ENCODE measurements at regions of chr1 and their contacts with region 1.

Region 1: DNA sequence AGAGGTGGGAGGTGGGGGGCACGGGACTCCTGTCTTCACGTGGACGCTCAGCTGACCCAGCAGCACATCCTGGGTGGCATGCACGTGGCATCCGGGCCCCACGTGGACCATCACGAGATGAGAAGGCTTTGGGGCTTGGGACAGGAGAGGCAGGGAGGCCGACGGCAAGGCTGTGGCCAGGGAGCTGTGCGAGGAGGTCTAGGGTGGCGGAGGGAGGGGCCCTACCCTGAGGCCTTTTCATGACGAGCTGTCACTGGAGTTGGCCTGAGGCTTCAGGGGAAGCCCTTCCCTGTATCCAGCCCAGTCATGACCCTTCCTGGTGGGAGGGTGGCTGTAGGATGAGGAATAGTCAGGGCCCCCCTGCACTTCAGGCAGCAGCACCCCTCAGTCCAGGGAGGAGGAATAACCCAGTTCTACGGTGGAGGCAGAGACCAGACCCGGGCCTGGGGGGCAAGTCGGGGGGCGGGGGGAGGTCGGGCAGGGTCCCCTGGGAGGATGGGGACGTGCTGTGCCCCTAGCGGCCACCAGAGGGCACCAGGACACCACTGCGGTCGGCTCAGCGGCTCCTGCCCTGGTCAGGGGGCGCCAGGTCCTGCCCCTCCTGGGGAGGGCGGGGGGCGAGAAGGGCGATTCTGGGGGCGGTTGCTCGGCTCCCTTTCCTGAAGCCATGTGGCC is 2.0 kb upstream of the PERM1 start:
- DNase-seq: peak; percentile 52
- H3K27ac ChIP-seq: peak overlapping the region; percentile 7; the same call in 1 of the 2 replicates
- CTCF ChIP-seq: peak; percentile 93

Region 2: DNA sequence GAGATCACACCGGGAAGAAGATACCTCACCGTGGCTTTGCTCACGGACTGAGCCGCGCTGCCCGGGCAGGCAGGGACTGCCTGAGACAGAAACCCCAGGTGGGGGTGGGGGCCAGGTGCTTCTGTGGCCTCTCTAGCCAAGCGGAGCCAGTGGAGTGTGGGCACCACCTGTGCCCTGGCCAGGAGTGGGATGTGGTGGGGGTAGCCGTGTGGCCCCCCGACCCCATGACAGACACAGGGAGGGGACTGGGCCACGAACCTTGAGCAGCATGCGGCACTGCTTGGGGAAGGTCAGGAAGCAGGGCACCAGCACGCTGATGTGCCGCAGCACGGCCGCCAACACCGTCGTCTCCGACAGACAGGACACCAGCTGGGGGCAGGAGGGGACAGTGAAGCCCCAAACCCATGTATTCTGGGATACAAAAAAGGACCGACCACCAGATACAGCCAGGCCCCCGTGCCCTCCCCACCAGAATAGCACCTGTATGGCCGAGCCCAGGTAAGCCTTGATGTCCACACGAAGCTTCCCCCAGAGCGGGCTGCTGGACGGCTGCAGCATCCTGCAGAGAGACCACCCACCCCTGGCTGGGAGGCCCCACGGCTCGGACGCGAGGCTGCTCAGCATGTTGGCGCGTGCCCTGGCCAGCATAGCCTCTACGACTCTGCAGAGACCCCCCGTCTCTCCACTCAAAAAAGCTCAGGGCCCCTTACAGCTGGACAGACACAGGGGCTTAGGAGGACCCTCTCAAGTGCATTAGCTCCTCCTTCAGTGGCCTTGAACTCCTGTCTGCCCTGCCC is 30.2 kb before region 1 on chr1:
- CTCF ChIA-PET with region 1: no interaction called
- POLR2A ChIA-PET with region 1: no interaction called
- DNase-seq: no peak
- H3K27ac ChIP-seq: no peak overlapping the region
- CTCF ChIP-seq: no peak

Region 3: DNA sequence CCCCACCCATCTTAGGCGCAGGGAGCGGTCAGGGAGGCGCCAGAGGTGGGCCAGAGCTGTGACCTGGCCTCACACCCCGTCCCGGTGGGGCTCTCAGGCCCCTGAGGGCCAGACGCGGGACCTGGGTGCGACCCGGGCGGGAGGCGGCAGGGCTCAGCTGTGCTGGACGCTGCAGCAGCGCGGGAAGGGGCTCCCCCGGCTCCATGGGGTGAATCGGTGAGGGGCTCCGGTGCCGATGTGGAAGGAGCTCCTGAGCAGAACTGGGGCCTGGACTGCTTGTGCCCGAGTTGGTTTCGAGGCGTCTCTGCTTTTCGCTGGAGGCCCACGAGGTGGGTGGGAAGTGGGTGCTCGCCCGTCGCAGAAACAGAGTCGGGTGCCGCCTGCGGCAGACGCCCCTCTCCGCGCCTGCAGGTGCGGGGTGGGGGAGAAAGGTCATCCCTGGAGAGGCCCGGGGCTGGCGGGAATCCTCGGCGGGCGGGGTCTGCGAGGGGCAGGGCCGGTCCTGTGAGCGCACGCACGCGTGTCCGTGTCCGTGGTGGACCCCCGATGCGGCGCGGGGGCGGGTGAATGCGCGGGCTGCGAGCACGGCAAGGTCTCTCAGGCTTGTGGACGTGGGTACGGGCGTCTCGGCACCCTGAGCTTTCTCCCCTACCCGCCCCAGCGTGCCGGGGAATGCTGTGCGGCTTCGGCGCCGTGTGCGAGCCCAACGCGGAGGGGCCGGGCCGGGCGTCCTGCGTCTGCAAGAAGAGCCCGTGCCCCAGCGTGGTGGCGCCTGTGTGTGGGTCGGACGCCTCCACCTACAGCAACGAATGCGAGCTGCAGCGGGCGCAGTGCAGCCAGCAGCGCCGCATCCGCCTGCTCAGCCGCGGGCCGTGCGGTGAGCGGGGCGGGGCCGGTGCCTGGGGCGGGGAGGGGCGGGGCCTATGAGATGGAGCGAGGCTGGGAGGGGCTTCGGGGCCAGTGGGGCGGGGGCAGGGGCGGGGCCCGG is 56.4 kb after region 1 on chr1:
- CTCF ChIA-PET with region 1: no interaction called
- POLR2A ChIA-PET with region 1: no interaction called
- DNase-seq: peak; percentile 91
- H3K27ac ChIP-seq: peak overlapping the region; percentile 81
- CTCF ChIP-seq: peak; percentile 15; the same call in 1 of the 2 replicates

Region 4: GRCh38 chr1:1063945-1064831 is 80.3 kb after region 1 on chr1:
- CTCF ChIA-PET with region 1: interaction called, 50 read pairs
- POLR2A ChIA-PET with region 1: no interaction called
- DNase-seq: peak; percentile 58
- H3K27ac ChIP-seq: peak overlapping the region; percentile 78
- CTCF ChIP-seq: peak; percentile 94

Region 5: GRCh38 chr1:1237874-1238701 is 254.2 kb after region 1 on chr1:
- CTCF ChIA-PET with region 1: no interaction called
- POLR2A ChIA-PET with region 1: no interaction called
- DNase-seq: no peak
- H3K27ac ChIP-seq: peak overlapping the region; percentile 81
- CTCF ChIP-seq: no peak

Region 6: DNA sequence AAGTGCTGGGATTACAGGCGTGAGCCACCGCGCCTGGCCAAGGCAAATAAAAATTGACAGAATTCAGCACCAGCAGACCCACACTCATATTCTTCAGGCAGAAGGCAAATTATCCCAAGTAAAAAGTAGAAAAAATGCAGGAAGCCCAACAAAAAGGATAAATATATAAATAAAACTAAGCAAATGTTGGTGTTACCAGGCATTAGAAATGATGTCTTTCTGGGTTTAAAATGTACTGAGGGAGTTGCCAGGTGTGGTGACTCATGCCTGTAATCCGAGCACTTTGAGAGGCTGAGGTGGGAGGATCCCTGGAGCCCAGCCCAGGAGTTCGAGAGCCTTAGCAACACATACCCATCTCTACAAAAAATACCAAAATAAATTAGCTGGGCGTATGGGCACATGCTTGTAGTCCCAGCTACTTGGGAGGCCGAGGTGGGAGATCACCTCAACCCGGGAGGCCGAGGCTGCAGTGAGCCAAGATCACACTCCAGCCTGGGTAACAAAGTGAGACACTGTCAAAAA is 334.3 kb after region 1 on chr1:
- CTCF ChIA-PET with region 1: no interaction called
- POLR2A ChIA-PET with region 1: no interaction called
- DNase-seq: no peak
- H3K27ac ChIP-seq: peak overlapping the region; percentile 100
- CTCF ChIP-seq: no peak